Cardiac septum (tissue), 1 donor: ENCODE measurements at regions of chr7 and their contacts with region 1.

Region 1: GRCh38 chr7:16420649-16421332 is 547 bp downstream of the CRPPA start:
- DNase-seq: peak; percentile 92

Region 2: GRCh38 chr7:16114633-16115032 is 306.2 kb before region 1 on chr7:
- intact Hi-C with region 1: loop called (anchors 10 kb)
- DNase-seq: no peak